PC-9 (cell line): ENCODE measurements at regions of chr13 and their contacts with region 1.

Region 1: GRCh38 chr13:114065141-114065925 is 67.1 kb downstream of the RASA3 start:
- DNase-seq: peak; percentile 98 to 99
- H3K4me3 ChIP-seq: peak overlapping the region; percentile 53
- H3K27ac ChIP-seq: peak overlapping the region; percentile 92
- H3K4me1 ChIP-seq: peaks cover 61% of the 10 kb centered on the region
- H3K27me3 ChIP-seq: no peaks in the 10 kb centered on the region
- CTCF ChIP-seq: no peak

Region 2: GRCh38 chr13:113129921-113130750 is 935.2 kb before region 1 on chr13:
- CTCF ChIA-PET with region 1: no interaction called
- POLR2A ChIA-PET with region 1: no interaction called
- intact Hi-C with region 1: no loop called
- DNase-seq: no peak
- H3K4me3 ChIP-seq: no peak overlapping the region
- H3K27ac ChIP-seq: no peak overlapping the region
- H3K4me1 ChIP-seq: no peaks in the 10 kb centered on the region
- H3K27me3 ChIP-seq: peaks cover 88% of the 10 kb centered on the region
- CTCF ChIP-seq: no peak

Region 3: GRCh38 chr13:113816946-113817859 is 248.1 kb before region 1 on chr13:
- CTCF ChIA-PET with region 1: interaction called, 10 read pairs
- POLR2A ChIA-PET with region 1: no interaction called
- intact Hi-C with region 1: no loop called
- DNase-seq: peak; percentile 68 to 83
- H3K4me3 ChIP-seq: no peak overlapping the region
- H3K27ac ChIP-seq: no peak overlapping the region
- H3K4me1 ChIP-seq: peaks cover 41% of the 10 kb centered on the region
- H3K27me3 ChIP-seq: no peaks in the 10 kb centered on the region
- CTCF ChIP-seq: peak; percentile 92

Region 4: GRCh38 chr13:113951246-113951999 is 113.9 kb before region 1 on chr13:
- CTCF ChIA-PET with region 1: no interaction called
- POLR2A ChIA-PET with region 1: no interaction called
- intact Hi-C with region 1: loop called (anchors 1 kb)
- DNase-seq: peak; percentile 60 to 86
- H3K4me3 ChIP-seq: no peak overlapping the region
- H3K27ac ChIP-seq: no peak overlapping the region
- H3K4me1 ChIP-seq: no peaks in the 10 kb centered on the region
- H3K27me3 ChIP-seq: no peaks in the 10 kb centered on the region
- CTCF ChIP-seq: peak; percentile 89

Region 5: DNA sequence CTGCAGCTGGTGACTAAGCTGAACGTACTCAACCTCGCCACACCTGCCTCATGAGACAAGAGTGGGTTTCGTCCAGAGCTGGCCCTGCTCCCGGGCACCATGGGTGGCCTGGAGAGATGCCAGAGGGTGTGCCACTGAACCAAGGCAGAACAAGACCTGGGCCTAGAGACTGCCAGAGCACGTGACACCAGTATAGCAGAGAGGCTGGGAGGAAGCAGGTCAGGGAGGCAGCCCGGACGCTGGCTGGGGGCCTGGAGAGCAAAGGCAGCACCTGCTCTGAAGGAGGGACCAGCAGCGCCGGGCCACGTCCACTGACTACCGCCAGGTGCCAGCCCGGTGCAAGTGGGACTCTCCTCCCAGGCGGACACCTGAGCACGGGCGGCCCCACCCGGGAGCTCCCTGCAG is 84.1 kb before region 1 on chr13:
- CTCF ChIA-PET with region 1: interaction called, 4 read pairs
- POLR2A ChIA-PET with region 1: interaction called, 3 read pairs
- intact Hi-C with region 1: loop called (anchors 1 kb)
- DNase-seq: peak; percentile 98 to 99
- H3K4me3 ChIP-seq: no peak overlapping the region
- H3K27ac ChIP-seq: peak overlapping the region; percentile 63
- H3K4me1 ChIP-seq: peaks cover 36% of the 10 kb centered on the region
- H3K27me3 ChIP-seq: no peaks in the 10 kb centered on the region
- CTCF ChIP-seq: no peak; the same call in 1 of the 2 replicates

Region 6: GRCh38 chr13:114078461-114079451 is 13.4 kb after region 1 on chr13:
- CTCF ChIA-PET with region 1: no interaction called
- POLR2A ChIA-PET with region 1: no interaction called
- intact Hi-C with region 1: loop called (anchors 1 kb)
- DNase-seq: peak; percentile 83 to 90
- H3K4me3 ChIP-seq: peak overlapping the region; percentile 13; the same call in 1 of the 2 replicates
- H3K27ac ChIP-seq: peak overlapping the region; percentile 43
- H3K4me1 ChIP-seq: peaks cover 20% of the 10 kb centered on the region
- H3K27me3 ChIP-seq: no peaks in the 10 kb centered on the region
- CTCF ChIP-seq: no peak

Region 7: DNA sequence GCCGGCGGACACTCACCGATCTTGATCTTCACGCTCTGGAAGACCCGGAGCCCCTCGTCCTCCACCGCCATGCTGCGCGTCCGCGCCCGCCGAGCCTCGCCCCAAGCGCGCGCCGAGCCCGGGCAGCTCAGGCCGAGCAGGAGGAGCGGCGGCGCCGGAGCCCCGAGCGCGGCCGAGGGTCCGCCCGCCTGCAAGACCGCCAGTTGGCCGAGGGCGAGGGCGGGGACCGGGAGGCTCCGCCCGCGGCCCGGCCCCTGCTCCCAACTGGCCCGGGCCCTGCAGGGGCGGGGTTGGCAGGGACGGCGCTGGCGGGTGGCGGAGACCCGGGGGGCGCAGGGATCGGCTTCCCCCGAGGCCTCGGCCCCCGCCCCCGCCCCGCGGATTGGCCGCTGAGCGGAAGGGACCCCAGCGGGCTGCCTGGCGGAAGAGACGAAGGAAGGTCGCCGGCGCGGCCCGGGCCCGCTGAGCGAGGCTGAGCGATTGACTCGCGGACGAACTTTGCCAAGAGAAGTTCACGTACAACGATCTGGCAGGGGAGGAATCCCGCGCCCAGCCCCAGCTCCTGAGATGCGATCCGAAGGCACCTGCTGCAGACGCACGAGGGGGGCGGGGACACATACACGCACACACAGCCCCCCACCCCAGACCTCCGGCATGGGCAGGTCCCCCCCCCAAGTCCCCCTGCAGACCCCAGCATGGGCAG is 67.2 kb after region 1 on chr13 and contains the start of gene RASA3:
- CTCF ChIA-PET with region 1: no interaction called
- POLR2A ChIA-PET with region 1: no interaction called
- intact Hi-C with region 1: loop called (anchors 2 kb)
- DNase-seq: peak; percentile 49 to 76
- H3K4me3 ChIP-seq: peak within 1 kb of the TSS; percentile 78
- H3K27ac ChIP-seq: no peak within 1 kb of the TSS
- H3K4me1 ChIP-seq: peaks cover 16% of the 10 kb centered on the region
- H3K27me3 ChIP-seq: no peaks in the 10 kb centered on the region
- CTCF ChIP-seq: no peak
- total RNA-seq, gene RASA3: 9.7 and 10.0 TPM in 2 replicates